ENCODE measurements at regions of chr5 and their contacts with region 1.

Region 1: GRCh38 chr5:135139381-135140137 is 105.5 kb upstream of the PITX1 start:
- DNase-seq: peak; percentile 96
- ATAC-seq: peak; percentile 83
- H3K4me3 ChIP-seq: no peak overlapping the region; the same call in 1 of the 2 replicates
- H3K27ac ChIP-seq: peak overlapping the region; percentile 99
- H3K4me1 ChIP-seq: peaks cover 45% of the 10 kb centered on the region
- H3K27me3 ChIP-seq: no peaks in the 10 kb centered on the region
- CTCF ChIP-seq: no peak
- POLR2A ChIP-seq: no peak
- RAD21 ChIP-seq: no peak

Region 2: GRCh38 chr5:136014049-136015002 is 874.8 kb after region 1 on chr5:
- CTCF ChIA-PET with region 1: no interaction called
- POLR2A ChIA-PET with region 1: interaction called, 10 read pairs
- dilution Hi-C with region 1: no loop called
- in situ Hi-C with region 1: no loop called
- intact Hi-C with region 1: no loop called
- DNase-seq: no peak
- ATAC-seq: peak; percentile 52
- H3K4me3 ChIP-seq: no peak overlapping the region
- H3K27ac ChIP-seq: peak overlapping the region; percentile 54
- H3K4me1 ChIP-seq: peaks cover 31% of the 10 kb centered on the region
- H3K27me3 ChIP-seq: no peaks in the 10 kb centered on the region
- CTCF ChIP-seq: no peak
- POLR2A ChIP-seq: no peak
- RAD21 ChIP-seq: no peak

Measured in IMR-90 (cell line).